ENCODE measurements at regions of chr7 and their contacts with region 1.

Region 1: DNA sequence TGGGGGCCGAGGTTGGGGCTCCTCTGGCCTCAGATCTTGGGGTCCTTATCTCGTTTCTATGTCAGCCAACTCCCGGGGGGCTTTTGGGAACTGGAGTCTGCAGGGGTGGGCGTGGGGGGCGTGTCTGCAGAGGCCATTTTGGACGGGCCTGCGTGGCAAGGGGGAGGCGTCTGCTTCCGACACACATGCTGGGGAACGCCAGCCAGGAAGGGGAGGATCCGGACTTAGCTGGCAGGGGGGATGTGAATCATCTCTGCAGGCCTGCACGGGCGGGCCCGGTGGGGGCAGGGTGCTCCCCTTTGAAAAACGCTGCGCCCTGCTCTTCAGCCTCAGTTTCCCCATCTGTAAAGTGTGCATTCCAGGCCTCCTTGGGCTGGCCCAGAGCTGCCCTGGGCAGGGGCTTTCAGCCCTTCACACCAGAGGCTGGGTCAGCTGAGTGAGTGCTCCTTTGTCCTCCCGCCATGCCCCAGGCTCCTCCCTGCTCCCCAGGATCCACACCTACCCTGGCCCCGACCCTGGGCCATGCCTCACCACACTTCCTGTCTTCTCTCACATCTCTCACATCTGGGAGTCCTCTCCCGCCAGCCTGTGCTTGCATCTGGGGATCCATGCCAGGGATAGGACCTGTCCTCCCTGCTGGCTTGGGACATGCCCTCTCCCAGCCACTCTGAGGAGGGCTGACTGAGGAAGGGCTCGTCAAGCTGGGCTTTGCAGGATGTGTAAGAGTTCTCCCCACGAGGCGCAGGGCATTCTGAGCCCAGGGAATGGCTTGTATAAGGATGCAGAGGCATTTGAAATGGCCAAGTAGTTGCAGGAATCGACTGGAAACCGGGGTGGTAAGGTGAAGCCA is 172.6 kb upstream of the TNRC18 start:
- DNase-seq: peak; percentile 90
- H3K4me3 ChIP-seq: peak overlapping the region; percentile 63 to 99
- H3K27ac ChIP-seq: peak overlapping the region; percentile 88 to 92
- H3K4me1 ChIP-seq: peaks cover 34 to 42% of the 10 kb centered on the region in 2 experiments; a peak in 3 of 4 replicates
- H3K27me3 ChIP-seq: no peaks in the 10 kb centered on the region
- CTCF ChIP-seq: no peak
- EP300 ChIP-seq: peak; percentile 5 to 77; a peak in 2 of 4 replicates
- RAD21 ChIP-seq: peak; percentile 8; the same call in 1 of the 2 replicates

Region 2: GRCh38 chr7:5625938-5626337 is 29.7 kb after region 1 on chr7:
- CTCF ChIA-PET with region 1: no interaction called
- POLR2A ChIA-PET with region 1: interaction called, 10 read pairs
- DNase-seq: peak; percentile 36
- H3K4me3 ChIP-seq: no peak overlapping the region
- H3K27ac ChIP-seq: peak overlapping the region in 1 of 2 experiments; percentile 64; a peak in 2 of 4 replicates
- H3K4me1 ChIP-seq: peaks cover 16 to 26% of the 10 kb centered on the region in 2 experiments
- H3K27me3 ChIP-seq: no peaks in the 10 kb centered on the region
- CTCF ChIP-seq: peak; percentile 58
- EP300 ChIP-seq: no peak
- RAD21 ChIP-seq: no peak; the same call in 1 of the 2 replicates

Region 3: GRCh38 chr7:5636914-5637313 is 40.6 kb after region 1 on chr7:
- CTCF ChIA-PET with region 1: interaction called, 10 read pairs
- POLR2A ChIA-PET with region 1: no interaction called
- DNase-seq: peak; percentile 50
- H3K4me3 ChIP-seq: no peak overlapping the region
- H3K27ac ChIP-seq: peak overlapping the region; percentile 97 to 99
- H3K4me1 ChIP-seq: peaks cover 51 to 65% of the 10 kb centered on the region in 2 experiments
- H3K27me3 ChIP-seq: no peaks in the 10 kb centered on the region
- CTCF ChIP-seq: no peak
- EP300 ChIP-seq: 0 out of 4 replicates have a peak, but pooled peaks of 1 of the 2 experiments have one; percentile 25
- RAD21 ChIP-seq: no peak

Region 4: GRCh38 chr7:5704534-5704922 is 108.3 kb after region 1 on chr7:
- CTCF ChIA-PET with region 1: interaction called, 12 read pairs
- POLR2A ChIA-PET with region 1: no interaction called
- DNase-seq: peak; percentile 75
- H3K4me3 ChIP-seq: no peak overlapping the region
- H3K27ac ChIP-seq: peak overlapping the region; percentile 6 to 7; a peak in 3 of 4 replicates
- H3K4me1 ChIP-seq: peaks cover 9 to 13% of the 10 kb centered on the region in 2 experiments; a peak in 3 of 4 replicates
- H3K27me3 ChIP-seq: no peaks in the 10 kb centered on the region
- CTCF ChIP-seq: peak; percentile 99
- EP300 ChIP-seq: no peak
- RAD21 ChIP-seq: peak; percentile 98

Region 5: GRCh38 chr7:6398943-6399342 is 802.7 kb after region 1 on chr7:
- CTCF ChIA-PET with region 1: no interaction called
- POLR2A ChIA-PET with region 1: no interaction called
- DNase-seq: no peak
- H3K4me3 ChIP-seq: no peak overlapping the region
- H3K27ac ChIP-seq: no peak overlapping the region; a peak in 1 of 4 replicates
- H3K4me1 ChIP-seq: peaks cover 0 to 5% of the 10 kb centered on the region in 2 experiments; a peak in 1 of 4 replicates
- H3K27me3 ChIP-seq: no peaks in the 10 kb centered on the region
- CTCF ChIP-seq: no peak
- EP300 ChIP-seq: no peak
- RAD21 ChIP-seq: no peak